ENCODE measurements at regions of chr17 and their contacts with region 1.

Region 1: DNA sequence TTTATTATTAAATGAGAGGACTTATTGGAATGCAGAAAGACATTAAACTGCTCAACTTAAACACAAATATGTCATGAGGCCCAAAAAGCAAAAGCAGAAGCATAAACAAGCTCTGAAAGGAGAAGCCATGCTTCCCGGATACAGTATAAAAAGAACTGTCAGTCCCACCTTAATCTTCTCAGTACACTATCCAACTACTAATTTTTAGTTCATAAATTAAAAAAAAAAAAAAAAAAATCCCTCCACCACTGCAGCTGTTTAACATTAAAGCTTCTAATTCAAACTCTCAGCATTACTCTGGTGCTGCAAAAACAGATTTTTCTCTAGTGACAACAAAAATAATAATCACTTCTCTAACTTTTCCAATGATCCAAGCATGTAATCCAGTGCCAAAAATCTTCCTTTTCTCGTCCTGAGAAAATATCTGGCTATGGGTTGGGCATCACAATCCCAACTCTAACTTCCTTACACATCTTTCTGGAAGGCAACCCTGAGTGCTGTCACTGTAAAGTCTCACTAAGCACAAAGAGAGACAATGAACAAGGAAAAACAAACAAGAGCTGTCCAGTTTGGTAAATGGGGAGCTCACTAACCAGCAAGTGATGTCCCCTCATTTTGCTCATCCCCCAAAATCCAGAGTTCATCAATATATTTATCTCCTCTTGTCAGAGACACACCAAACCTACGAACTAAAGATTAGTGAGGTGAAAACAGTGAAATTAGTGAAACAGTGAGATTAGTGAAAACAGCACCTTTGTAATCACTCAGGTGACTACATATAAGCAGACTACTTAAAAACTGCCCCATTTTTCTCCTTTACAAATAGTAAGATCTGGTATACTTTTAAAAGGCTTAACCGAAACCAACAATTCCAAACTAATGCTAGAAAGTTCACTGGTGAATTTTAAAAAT is 5.5 kb downstream of the USP32 start:
- DNase-seq: no peak
- H3K4me3 ChIP-seq: no peak overlapping the region
- H3K27ac ChIP-seq: no peak overlapping the region
- H3K4me1 ChIP-seq: peaks cover 6% of the 10 kb centered on the region
- H3K27me3 ChIP-seq: no peaks in the 10 kb centered on the region
- CTCF ChIP-seq: no peak
- EP300 ChIP-seq: no peak
- POLR2A ChIP-seq: no peak

Region 2: GRCh38 chr17:59676716-59677115 is 709.7 kb before region 1 on chr17:
- intact Hi-C with region 1: no loop called
- DNase-seq: no peak
- H3K4me3 ChIP-seq: no peak overlapping the region
- H3K27ac ChIP-seq: no peak overlapping the region
- H3K4me1 ChIP-seq: no peaks in the 10 kb centered on the region
- H3K27me3 ChIP-seq: no peaks in the 10 kb centered on the region
- CTCF ChIP-seq: no peak
- EP300 ChIP-seq: no peak
- POLR2A ChIP-seq: no peak

Region 3: DNA sequence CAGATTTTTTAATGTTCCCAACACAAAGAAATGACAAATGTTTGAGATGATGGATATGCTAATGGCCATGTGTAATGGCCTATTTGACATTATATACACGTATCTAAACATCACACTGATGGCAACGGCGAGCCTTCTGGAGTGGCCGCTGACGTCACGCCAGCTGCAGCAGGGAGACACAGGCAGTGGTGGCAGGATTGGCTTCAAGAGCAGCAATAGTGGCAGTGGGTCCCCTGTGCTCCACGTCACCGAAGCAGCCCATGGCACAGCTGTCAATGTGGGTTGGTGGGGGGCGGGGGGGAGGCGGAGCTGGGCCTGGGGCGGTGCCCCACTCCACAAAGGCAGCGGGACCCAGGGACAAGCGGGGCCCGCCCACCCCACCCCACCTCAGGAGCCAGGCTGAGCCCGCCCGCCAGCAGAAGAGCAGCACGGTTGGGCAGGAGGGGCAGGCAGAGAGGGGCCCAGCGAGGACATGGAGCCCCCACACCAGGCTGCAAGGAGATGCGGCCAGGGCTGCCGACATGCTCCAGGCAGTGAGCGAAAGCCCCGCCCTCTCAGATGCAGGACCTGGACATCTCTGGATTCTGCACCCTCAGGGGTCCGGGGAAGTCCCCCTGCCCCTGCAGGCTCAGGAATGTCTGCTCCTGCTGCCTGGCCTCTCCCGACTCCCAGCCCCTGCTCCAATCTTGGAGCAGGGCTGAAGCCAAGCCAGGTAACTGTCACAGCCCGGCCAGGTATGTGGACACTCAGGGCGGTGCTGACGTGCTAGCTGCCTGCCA is 59.1 kb before region 1 on chr17:
- intact Hi-C with region 1: loop called in 1 of 4 experiments (anchors 10 kb)
- DNase-seq: no peak
- H3K4me3 ChIP-seq: no peak overlapping the region
- H3K27ac ChIP-seq: no peak overlapping the region
- H3K4me1 ChIP-seq: no peaks in the 10 kb centered on the region
- H3K27me3 ChIP-seq: no peaks in the 10 kb centered on the region
- CTCF ChIP-seq: no peak
- EP300 ChIP-seq: no peak
- POLR2A ChIP-seq: no peak

Measured in ovary (tissue), 10 donors.